ENCODE measurements at regions of chr4 and their contacts with region 1.

Region 1: DNA sequence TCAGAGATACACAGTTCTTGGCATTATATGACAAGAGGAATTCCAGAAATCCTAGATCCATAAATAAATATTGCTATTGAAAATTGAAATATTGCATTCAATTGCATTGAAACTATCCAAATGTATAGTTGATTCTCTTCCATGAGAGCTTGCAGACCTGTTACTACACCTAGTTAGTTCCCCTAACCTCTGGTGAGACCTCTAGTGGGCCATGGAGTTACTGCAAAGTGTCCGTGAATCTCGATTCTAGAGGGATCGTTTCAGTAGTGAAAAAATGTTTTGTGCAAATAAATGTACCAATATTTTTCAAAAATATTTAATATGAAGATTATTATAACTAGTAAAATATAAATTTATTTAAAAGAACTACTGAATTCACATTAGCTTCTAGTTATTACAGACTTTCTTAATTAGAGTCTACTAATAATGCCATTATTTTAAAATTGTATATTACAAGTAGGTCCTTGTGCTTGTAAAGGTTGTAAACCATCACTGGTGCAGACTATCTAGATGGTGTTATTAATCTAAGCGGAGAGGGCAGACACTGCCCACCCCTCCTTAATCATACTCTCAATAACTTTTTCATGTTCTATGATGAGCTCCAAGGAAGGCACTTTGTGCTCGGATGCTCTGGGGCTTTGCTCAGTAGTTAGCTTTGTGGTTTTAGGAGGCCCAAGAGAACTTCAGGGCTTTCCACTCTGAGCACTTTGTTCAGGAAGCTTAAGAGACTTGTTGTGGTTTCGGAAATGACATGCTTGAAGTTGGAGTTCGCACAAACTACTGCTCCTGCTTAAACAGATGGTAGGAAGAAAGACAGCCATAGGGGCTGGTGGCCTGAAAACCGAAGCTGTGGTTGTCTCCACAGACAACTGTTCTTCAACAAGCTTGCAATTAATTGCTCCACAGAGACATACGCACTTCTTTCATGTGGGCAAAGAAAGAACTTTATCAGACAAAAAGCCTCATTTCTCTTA is 42.8 kb downstream of the IL21 start:
- DNase-seq: peak; percentile 40
- H3K4me3 ChIP-seq: no peak overlapping the region
- H3K27ac ChIP-seq: no peak overlapping the region
- H3K4me1 ChIP-seq: no peaks in the 10 kb centered on the region
- H3K27me3 ChIP-seq: peaks cover 2% of the 10 kb centered on the region in 2 experiments
- CTCF ChIP-seq: peak; percentile 50 to 60
- POLR2A ChIP-seq: no peak

Region 2: GRCh38 chr4:121823505-121824170 is 754.5 kb before region 1 on chr4 and contains the start of gene CCNA2:
- CTCF ChIA-PET with region 1: interaction called, 5 read pairs
- POLR2A ChIA-PET with region 1: no interaction called
- dilution Hi-C with region 1: no loop called
- intact Hi-C with region 1: loop called (anchors 5 kb)
- DNase-seq: peak; percentile 95
- H3K4me3 ChIP-seq: peak within 1 kb of the TSS; percentile 86 to 96 (median 86)
- H3K27ac ChIP-seq: peak within 1 kb of the TSS; percentile 64
- H3K4me1 ChIP-seq: peaks cover 27% of the 10 kb centered on the region
- H3K27me3 ChIP-seq: no peaks in the 10 kb centered on the region
- CTCF ChIP-seq: no peak
- POLR2A ChIP-seq: peak; percentile 73
- total RNA-seq, gene CCNA2: 63.1 and 65.4 TPM in 2 replicates

Region 3: GRCh38 chr4:121950212-121950679 is 627.8 kb before region 1 on chr4:
- CTCF ChIA-PET with region 1: interaction called, 19 read pairs
- POLR2A ChIA-PET with region 1: no interaction called
- dilution Hi-C with region 1: no loop called
- intact Hi-C with region 1: loop called (anchors 1 kb)
- DNase-seq: peak; percentile 56
- H3K4me3 ChIP-seq: peak overlapping the region; percentile 35 to 73 (median 61)
- H3K27ac ChIP-seq: no peak overlapping the region
- H3K4me1 ChIP-seq: peaks cover 9% of the 10 kb centered on the region
- H3K27me3 ChIP-seq: peaks cover 29 to 38% of the 10 kb centered on the region in 2 experiments
- CTCF ChIP-seq: peak; percentile 77 to 92
- POLR2A ChIP-seq: no peak

Region 4: GRCh38 chr4:122229857-122230256 is 348.2 kb before region 1 on chr4:
- CTCF ChIA-PET with region 1: no interaction called
- POLR2A ChIA-PET with region 1: no interaction called
- dilution Hi-C with region 1: no loop called
- intact Hi-C with region 1: loop called (anchors 5 kb)
- DNase-seq: no peak
- H3K4me3 ChIP-seq: no peak overlapping the region
- H3K27ac ChIP-seq: no peak overlapping the region
- H3K4me1 ChIP-seq: no peaks in the 10 kb centered on the region
- H3K27me3 ChIP-seq: no peaks in the 10 kb centered on the region
- CTCF ChIP-seq: no peak
- POLR2A ChIP-seq: no peak

Region 5: GRCh38 chr4:122458625-122459024 is 119.5 kb before region 1 on chr4:
- CTCF ChIA-PET with region 1: no interaction called
- POLR2A ChIA-PET with region 1: no interaction called
- dilution Hi-C with region 1: no loop called
- intact Hi-C with region 1: loop called (anchors 10 kb)
- DNase-seq: peak; percentile 6
- H3K4me3 ChIP-seq: peak overlapping the region in 1 of 3 experiments; percentile 42
- H3K27ac ChIP-seq: no peak overlapping the region
- H3K4me1 ChIP-seq: peaks cover 3% of the 10 kb centered on the region
- H3K27me3 ChIP-seq: no peaks in the 10 kb centered on the region
- CTCF ChIP-seq: no peak
- POLR2A ChIP-seq: no peak

Region 6: GRCh38 chr4:122489061-122489460 is 89.0 kb before region 1 on chr4:
- CTCF ChIA-PET with region 1: no interaction called
- POLR2A ChIA-PET with region 1: no interaction called
- dilution Hi-C with region 1: no loop called
- intact Hi-C with region 1: no loop called
- DNase-seq: no peak
- H3K4me3 ChIP-seq: no peak overlapping the region
- H3K27ac ChIP-seq: no peak overlapping the region
- H3K4me1 ChIP-seq: no peaks in the 10 kb centered on the region
- H3K27me3 ChIP-seq: peaks cover 0 to 3% of the 10 kb centered on the region in 2 experiments
- CTCF ChIP-seq: no peak
- POLR2A ChIP-seq: no peak

Region 7: DNA sequence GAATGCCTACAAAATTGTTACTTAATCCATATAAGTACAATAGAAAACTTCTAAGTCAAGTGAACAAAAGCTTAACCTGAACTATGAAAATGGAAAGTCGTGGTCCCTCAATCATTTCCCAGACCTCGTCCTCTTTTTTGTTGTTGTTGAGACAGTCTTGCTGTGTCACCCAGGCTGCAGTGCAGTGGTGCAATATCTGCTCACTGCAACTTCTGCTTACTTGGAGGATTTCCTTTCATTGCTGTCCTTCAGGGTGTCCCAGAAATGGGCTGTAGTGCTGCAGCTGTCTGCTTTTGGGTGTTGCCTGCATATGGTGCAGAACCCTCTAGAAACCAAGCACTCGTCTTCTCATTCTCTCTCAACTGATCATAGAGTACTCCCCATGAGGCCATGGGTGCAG is 46.6 kb before region 1 on chr4:
- CTCF ChIA-PET with region 1: no interaction called
- POLR2A ChIA-PET with region 1: no interaction called
- dilution Hi-C with region 1: no loop called
- intact Hi-C with region 1: no loop called
- DNase-seq: no peak
- H3K4me3 ChIP-seq: no peak overlapping the region
- H3K27ac ChIP-seq: no peak overlapping the region
- H3K4me1 ChIP-seq: no peaks in the 10 kb centered on the region
- H3K27me3 ChIP-seq: peaks cover 3 to 12% of the 10 kb centered on the region in 2 experiments
- CTCF ChIP-seq: no peak
- POLR2A ChIP-seq: no peak

Measured in endothelial cell of umbilical vein (primary cell).